Tibial artery (tissue), 4 donors: ENCODE measurements at regions of chr4 and their contacts with region 1.

Region 1: GRCh38 chr4:185219551-185220344 is 10.3 kb downstream of the SNX25 start:
- DNase-seq: no peak
- H3K4me3 ChIP-seq: no peak overlapping the region
- H3K27ac ChIP-seq: peak overlapping the region in 1 of 2 donors; percentile 28
- H3K4me1 ChIP-seq: peaks cover 0 to 50% (median 10%) of the 10 kb centered on the region in 4 donors
- H3K27me3 ChIP-seq: no peaks in the 10 kb centered on the region
- CTCF ChIP-seq: no peak

Region 2: DNA sequence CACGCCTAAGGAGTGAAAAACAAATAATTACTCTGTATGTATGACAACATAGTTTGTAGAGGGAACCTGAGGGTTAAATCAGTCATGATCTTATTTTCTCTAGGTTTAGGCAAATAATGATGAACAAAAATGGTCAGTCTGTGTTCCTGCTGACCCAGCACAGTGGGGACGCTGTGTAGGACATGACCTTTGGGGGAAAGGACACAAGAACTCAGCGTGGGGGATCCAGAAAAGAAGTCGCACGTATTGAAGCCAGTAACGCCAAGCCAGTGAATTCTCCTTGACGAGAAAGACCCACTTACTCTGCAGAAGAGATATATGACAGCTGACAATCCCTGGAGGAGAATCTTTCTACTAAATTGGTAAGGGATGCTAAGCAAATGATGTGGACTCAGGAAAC is 164.9 kb before region 1 on chr4:
- intact Hi-C with region 1: no loop called
- DNase-seq: no peak
- H3K4me3 ChIP-seq: no peak overlapping the region
- H3K27ac ChIP-seq: no peak overlapping the region
- H3K4me1 ChIP-seq: peaks cover 0 to 18% (median 3%) of the 10 kb centered on the region in 4 donors
- H3K27me3 ChIP-seq: no peaks in the 10 kb centered on the region
- CTCF ChIP-seq: no peak

Region 3: DNA sequence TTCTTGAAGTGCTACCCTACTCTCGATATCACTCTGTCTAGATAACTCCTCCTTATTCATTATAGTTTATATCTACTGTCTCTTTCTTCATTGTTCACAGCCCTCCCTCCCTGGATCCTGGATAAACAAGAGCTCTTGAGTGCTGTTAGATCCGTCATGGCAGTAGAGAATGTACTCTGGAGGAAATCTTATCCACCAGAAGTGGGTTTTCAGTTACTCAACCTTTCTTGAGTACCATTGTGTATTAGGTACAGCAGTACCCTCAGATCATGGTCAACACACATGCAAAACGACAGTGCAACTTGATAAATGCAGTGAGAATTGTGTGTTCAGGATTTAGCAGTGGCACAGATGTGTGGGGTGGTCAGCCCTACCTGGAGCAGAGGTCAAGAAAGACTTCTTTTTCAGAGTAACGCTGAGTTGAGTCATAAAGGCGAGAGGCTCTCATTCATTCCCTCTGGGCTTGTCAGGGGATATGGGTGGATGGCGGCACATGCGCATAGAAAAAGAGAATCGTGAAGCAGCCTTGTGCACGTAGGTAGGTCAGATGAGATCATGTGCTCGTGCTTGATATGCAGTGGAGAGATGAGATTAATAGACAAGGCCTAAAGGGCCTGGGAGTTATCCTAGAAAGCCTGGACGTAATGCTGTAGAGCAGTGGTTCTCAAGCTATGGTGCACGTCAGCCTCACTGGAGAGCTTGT is 79.1 kb after region 1 on chr4:
- intact Hi-C with region 1: no loop called
- DNase-seq: no peak
- H3K4me3 ChIP-seq: no peak overlapping the region
- H3K27ac ChIP-seq: no peak overlapping the region
- H3K4me1 ChIP-seq: no peaks in the 10 kb centered on the region
- H3K27me3 ChIP-seq: no peaks in the 10 kb centered on the region
- CTCF ChIP-seq: no peak

Region 4: GRCh38 chr4:185369731-185370130 is 150.0 kb after region 1 on chr4:
- intact Hi-C with region 1: loop called (anchors 10 kb)
- DNase-seq: no peak
- H3K4me3 ChIP-seq: no peak overlapping the region
- H3K27ac ChIP-seq: no peak overlapping the region
- H3K4me1 ChIP-seq: no peaks in the 10 kb centered on the region
- H3K27me3 ChIP-seq: no peaks in the 10 kb centered on the region
- CTCF ChIP-seq: no peak